ENCODE measurements at regions of chr10 and their contacts with region 1.

Region 1: GRCh38 chr10:25226775-25227682 is 52.2 kb downstream of the GPR158 start:
- DNase-seq: no peak
- ATAC-seq: no peak
- H3K4me3 ChIP-seq: no peak overlapping the region
- H3K27ac ChIP-seq: no peak overlapping the region
- H3K4me1 ChIP-seq: no peaks in the 10 kb centered on the region
- H3K27me3 ChIP-seq: peaks cover 0 to 2% of the 10 kb centered on the region in 2 donors

Region 2: DNA sequence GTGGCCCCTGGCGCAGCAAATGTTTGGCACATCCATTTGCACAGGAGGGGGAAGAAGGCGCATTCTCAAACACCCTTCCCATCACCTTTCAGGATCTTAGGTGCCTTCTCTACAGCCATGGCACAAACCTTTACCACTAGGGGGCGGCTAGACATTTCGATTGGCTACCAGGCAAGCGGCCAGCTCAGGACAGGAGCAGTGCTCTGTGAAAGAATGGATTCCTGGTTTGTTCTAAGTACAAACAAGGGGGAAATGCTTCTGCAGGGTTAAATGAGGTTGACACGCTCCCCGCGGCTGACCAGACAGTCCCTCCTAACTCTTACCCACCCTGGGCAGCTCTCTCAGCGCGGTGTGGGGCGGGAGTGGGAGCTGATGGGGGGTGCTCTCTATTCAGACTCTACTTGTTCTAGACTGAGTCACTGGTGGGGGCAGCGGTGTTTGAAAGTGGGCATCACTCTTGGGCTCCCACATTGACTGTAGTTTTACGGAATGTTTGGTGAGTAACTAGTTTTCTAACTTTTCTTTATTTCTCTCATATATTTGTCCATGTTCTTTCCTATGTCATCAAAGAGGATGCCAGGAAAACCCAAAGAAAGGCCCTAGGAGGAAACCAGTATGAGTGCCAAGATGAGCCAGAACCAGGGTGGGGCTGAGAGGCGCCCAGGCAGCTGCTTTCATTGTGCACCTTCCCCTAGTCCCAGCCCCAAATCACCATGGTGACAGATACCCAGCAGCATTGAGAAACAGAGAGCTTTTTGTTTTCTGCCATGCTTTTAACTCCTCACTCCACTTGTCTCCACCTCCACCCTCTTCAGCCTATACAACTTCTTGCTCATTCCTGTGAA is 113.6 kb before region 1 on chr10:
- intact Hi-C with region 1: loop called (anchors 5 to 10 kb)
- DNase-seq: peak; percentile 65 to 82
- ATAC-seq: peak; percentile 79
- H3K4me3 ChIP-seq: no peak overlapping the region
- H3K27ac ChIP-seq: no peak overlapping the region
- H3K4me1 ChIP-seq: no peaks in the 10 kb centered on the region
- H3K27me3 ChIP-seq: no peaks in the 10 kb centered on the region

Measured in aorta (tissue), 5 donors.